CD8-positive, alpha-beta T cell (primary cell): ENCODE measurements at regions of chr14 and their contacts with region 1.

Region 1: GRCh38 chr14:23379366-23380196 is 2.7 kb downstream of the CMTM5 start:
- DNase-seq: peak; percentile 41 to 81 (median 69)
- ATAC-seq: peak; percentile 88
- H3K4me3 ChIP-seq: no peak overlapping the region
- H3K4me3 Mint-ChIP-seq: no peak overlapping the region
- H3K27ac ChIP-seq: no peak overlapping the region
- H3K27ac Mint-ChIP-seq: no peak overlapping the region
- H3K4me1 ChIP-seq: no peaks in the 10 kb centered on the region
- H3K4me1 Mint-ChIP-seq: no peaks in the 10 kb centered on the region
- H3K27me3 ChIP-seq: no peaks in the 10 kb centered on the region
- H3K27me3 Mint-ChIP-seq: peaks cover 14% of the 10 kb centered on the region
- CTCF ChIP-seq: peak; percentile 76

Region 2: GRCh38 chr14:23258256-23258655 is 121.3 kb before region 1 on chr14:
- CTCF ChIA-PET with region 1: interaction called, 27 read pairs
- POLR2A ChIA-PET with region 1: no interaction called
- intact Hi-C with region 1: no loop called
- DNase-seq: no peak
- ATAC-seq: no peak
- H3K4me3 ChIP-seq: no peak overlapping the region
- H3K4me3 Mint-ChIP-seq: no peak overlapping the region
- H3K27ac ChIP-seq: no peak overlapping the region
- H3K27ac Mint-ChIP-seq: no peak overlapping the region
- H3K4me1 ChIP-seq: no peaks in the 10 kb centered on the region
- H3K4me1 Mint-ChIP-seq: no peaks in the 10 kb centered on the region
- H3K27me3 ChIP-seq: peaks cover 4 to 6% of the 10 kb centered on the region in 2 experiments
- H3K27me3 Mint-ChIP-seq: peaks cover 36% of the 10 kb centered on the region
- CTCF ChIP-seq: no peak

Region 3: DNA sequence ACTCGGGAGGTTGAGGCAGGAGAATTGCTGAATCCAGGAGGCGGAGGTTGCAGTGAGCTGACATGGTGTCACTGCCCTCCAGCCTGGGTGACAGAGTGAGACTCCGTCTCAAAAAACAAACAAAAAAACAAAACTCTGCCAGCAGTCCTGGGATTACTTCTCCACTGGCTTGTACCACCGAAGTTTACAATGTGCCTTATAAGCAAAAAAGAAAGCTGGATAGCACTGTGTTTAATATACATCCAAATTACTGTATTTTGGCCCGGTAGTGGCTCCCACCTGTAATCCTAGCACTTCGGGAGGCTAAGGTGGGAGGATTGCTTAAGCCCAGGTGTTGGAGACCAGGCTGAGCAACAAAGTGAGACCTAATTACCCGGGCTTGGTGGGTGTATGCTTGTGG is 110.4 kb before region 1 on chr14:
- CTCF ChIA-PET with region 1: interaction called, 27 read pairs
- POLR2A ChIA-PET with region 1: interaction called, 3 read pairs
- intact Hi-C with region 1: loop called in 1 of 2 experiments (anchors 1 kb)
- DNase-seq: no peak
- ATAC-seq: no peak
- H3K4me3 ChIP-seq: no peak overlapping the region
- H3K4me3 Mint-ChIP-seq: no peak overlapping the region
- H3K27ac ChIP-seq: no peak overlapping the region
- H3K27ac Mint-ChIP-seq: no peak overlapping the region
- H3K4me1 ChIP-seq: no peaks in the 10 kb centered on the region
- H3K4me1 Mint-ChIP-seq: no peaks in the 10 kb centered on the region
- H3K27me3 ChIP-seq: peaks cover 0 to 2% of the 10 kb centered on the region in 2 experiments
- H3K27me3 Mint-ChIP-seq: peaks cover 2% of the 10 kb centered on the region
- CTCF ChIP-seq: no peak

Region 4: DNA sequence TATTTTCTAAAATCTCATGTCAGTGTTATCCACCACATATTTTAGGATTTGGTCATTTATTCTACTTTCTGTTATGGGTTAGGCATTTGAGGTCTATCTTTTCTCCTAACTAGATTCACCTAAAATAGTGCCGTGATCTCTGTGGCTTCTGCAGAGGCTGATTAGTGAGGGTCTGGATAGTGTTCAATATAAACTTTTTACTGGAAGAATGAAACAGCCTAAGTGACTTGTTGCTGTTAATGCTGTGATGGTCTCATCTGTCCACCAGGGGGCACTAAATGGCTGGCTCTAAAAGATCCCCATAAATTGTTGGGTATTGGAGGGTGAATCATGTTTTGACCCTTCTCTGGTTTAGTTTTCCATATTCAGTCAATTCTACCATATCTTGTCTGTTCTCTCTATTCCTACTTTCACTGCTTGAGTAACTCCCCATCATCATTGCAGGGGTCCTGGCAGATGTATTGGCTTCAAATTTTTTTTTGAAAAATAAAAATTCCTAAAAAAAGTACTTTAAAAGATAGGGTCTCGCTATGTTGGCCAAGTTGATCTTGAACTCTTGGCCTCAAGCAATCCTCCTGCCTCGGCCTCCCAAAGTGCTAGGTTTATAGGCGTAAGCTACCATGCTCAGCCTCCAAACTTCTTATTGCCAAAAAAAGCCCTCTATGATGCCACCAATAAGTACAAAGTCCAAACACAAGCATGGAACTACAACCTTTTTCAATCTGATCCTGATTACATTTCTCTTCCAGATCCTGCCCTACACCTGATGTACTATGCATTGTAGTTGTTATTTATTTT is 51.4 kb before region 1 on chr14:
- CTCF ChIA-PET with region 1: interaction called, 69 read pairs
- POLR2A ChIA-PET with region 1: interaction called, 3 read pairs
- intact Hi-C with region 1: loop called (anchors 1 kb)
- DNase-seq: peak in 8 of 9 experiments; percentile 43 to 82 (median 71)
- ATAC-seq: peak; percentile 82
- H3K4me3 ChIP-seq: no peak overlapping the region
- H3K4me3 Mint-ChIP-seq: no peak overlapping the region
- H3K27ac ChIP-seq: no peak overlapping the region
- H3K27ac Mint-ChIP-seq: no peak overlapping the region
- H3K4me1 ChIP-seq: peaks cover 2% of the 10 kb centered on the region
- H3K4me1 Mint-ChIP-seq: peaks cover 9% of the 10 kb centered on the region
- H3K27me3 ChIP-seq: no peaks in the 10 kb centered on the region
- H3K27me3 Mint-ChIP-seq: no peaks in the 10 kb centered on the region
- CTCF ChIP-seq: peak; percentile 87

Region 5: DNA sequence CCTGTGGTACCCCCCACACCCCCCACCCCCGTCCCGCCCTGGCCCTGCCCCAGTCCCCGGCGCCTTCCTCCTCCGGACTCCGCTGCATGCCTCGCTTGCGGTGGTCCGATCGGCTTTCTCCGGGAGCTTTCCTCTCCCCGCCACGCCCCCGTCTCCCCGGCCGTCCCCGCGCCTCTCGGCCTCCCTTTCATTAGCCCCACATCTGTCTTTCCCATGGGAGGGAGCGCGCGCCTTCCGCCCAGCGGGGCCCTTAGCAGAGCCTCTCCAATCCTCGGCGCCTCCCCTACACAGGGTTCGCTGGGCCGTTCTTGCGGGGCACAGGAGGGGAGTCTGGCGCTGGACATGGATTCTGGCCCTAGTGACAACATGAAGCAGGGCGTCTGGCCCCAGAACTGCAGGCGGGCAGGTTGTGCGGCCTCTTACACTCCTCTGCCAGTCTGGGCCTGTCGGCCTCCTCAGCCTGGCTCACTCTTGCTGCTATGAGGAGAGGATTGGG is 13.1 kb before region 1 on chr14:
- CTCF ChIA-PET with region 1: interaction called, 20 read pairs
- POLR2A ChIA-PET with region 1: no interaction called
- intact Hi-C with region 1: no loop called
- DNase-seq: no peak
- ATAC-seq: no peak
- H3K4me3 ChIP-seq: no peak overlapping the region
- H3K4me3 Mint-ChIP-seq: no peak overlapping the region
- H3K27ac ChIP-seq: no peak overlapping the region
- H3K27ac Mint-ChIP-seq: no peak overlapping the region
- H3K4me1 ChIP-seq: no peaks in the 10 kb centered on the region
- H3K4me1 Mint-ChIP-seq: peaks cover 3% of the 10 kb centered on the region
- H3K27me3 ChIP-seq: peaks cover 11 to 14% of the 10 kb centered on the region in 2 experiments
- H3K27me3 Mint-ChIP-seq: peaks cover 30% of the 10 kb centered on the region
- CTCF ChIP-seq: no peak